Motor neuron (in vitro differentiated cells): ENCODE measurements at regions of chr11 and their contacts with region 1.

Region 1: GRCh38 chr11:82682003-82682751 is 51.5 kb downstream of the FAM181B start:
- ATAC-seq: peak in 4 of 8 experiments; percentile 50 to 96 (median 93)
- H3K4me3 ChIP-seq: no peak overlapping the region
- H3K27ac ChIP-seq: no peak overlapping the region
- H3K4me1 ChIP-seq: no peaks in the 10 kb centered on the region

Region 2: DNA sequence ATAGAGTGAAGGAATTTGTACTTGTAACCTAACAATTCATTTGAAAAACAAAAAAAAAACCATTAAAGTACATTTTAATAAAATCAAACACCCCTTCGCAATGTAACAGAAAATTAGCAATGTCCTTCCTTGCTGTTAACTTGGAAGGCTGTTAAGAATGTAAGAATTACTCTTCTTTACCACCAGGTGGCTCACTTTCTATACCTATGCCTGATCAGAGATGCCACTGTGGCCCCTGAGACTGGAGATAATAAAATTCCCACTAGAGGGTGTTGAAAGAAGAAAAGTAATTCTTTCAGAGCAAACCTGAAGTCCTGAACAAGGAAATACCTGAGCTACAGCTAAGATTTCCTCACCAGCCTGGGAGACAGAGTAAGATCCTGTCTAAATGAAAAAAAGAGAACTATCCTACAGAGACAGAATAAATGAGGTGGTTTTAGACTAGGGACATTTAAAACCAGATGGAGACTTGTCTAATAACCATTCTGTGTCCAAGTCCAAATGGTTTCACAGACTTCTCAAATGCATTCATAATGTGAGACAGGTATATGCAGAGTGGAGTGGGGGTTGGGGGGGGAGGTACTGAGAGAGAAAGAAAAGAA is 1037.8 kb before region 1 on chr11:
- in situ Hi-C with region 1: loop called in 2 of 9 experiments (anchors 25 kb)
- ATAC-seq: peak in 4 of 8 experiments; percentile 44 to 91 (median 62)
- H3K4me3 ChIP-seq: no peak overlapping the region
- H3K27ac ChIP-seq: no peak overlapping the region
- H3K4me1 ChIP-seq: peaks cover 6 to 10% of the 10 kb centered on the region in 2 donors

Region 3: DNA sequence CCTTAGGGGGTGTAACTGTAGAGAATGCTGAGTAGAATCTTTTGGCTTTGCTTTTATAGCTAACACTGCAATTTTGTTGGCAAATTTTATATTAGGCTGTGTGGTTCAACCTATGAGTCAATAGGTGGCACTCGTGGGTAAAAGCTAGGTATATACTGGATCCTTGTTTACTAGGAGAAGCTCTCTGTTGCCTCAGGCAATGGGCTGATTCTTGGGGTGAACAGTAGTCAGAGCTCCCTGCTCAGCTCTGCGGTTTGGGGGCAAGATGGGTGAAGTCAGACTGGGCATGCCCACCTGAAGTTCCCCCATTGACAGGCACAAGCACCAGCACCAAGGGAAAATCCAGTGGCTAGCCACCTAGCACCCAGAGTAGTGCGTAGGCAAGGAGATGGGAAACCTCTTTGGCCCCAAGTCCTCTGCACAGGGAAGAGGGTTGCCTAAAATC is 187.2 kb before region 1 on chr11:
- in situ Hi-C with region 1: loop called in 1 of 9 experiments (anchors 25 kb)
- ATAC-seq: peak in 3 of 8 experiments; percentile 34 to 80 (median 62)
- H3K4me3 ChIP-seq: no peak overlapping the region
- H3K27ac ChIP-seq: no peak overlapping the region
- H3K4me1 ChIP-seq: no peaks in the 10 kb centered on the region

Region 4: DNA sequence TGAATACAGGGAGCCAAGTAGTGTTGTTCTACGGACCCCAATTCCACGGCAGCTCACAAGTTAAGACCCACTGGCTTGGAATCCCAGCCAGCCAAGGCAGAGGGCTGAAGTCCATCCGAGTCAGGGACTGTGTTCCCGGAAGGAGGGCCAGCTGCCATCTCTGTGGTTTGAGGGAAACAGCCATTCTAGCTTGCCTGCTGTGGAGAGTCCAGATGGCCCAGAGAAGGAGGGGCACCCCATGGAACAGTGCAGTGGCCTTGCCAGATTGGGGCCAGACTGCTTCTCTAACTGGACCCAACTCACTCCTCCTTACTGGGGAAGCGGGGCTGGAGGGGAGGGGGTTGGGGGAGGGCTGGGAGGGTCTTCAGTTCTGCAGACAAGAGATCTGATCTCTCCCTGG is 104.9 kb before region 1 on chr11:
- in situ Hi-C with region 1: no loop called
- ATAC-seq: no peak
- H3K4me3 ChIP-seq: no peak overlapping the region
- H3K27ac ChIP-seq: no peak overlapping the region
- H3K4me1 ChIP-seq: no peaks in the 10 kb centered on the region

Region 5: DNA sequence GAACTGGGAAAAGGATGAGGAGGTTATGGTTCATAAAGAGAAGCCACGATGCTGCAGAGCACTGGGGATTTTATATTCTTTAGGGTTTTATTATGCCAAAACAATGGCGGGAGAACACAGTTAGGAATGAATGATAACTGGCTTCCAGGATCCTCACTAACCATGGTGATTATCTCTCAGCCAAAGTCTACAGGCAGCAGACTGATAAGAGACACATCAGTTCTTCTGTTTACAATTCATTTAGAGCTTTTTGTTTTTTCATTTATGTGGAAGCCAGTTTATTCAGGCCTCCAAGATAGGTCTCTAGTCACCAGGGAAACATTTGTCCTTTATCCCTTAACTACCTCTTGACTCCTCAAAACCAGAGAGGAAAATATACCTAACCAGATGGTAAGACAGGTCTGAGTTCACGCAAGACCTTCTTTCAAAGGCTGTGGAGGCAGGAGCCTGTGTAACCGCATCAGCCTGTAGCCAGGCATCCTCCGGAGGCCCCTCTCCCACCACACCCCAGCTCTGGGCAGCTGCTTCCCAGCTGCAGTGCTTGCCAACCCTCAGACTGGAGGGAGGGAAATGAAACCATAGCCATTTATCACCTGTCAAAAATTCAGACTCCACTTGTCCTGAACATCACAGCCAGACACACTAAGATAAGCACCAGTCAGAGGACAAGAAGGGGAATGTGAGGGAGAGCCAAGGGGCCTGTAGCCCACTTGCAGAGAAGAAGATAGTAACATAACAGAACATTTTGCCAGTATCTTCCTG is 108.7 kb after region 1 on chr11:
- in situ Hi-C with region 1: no loop called
- ATAC-seq: peak in 6 of 8 experiments; percentile 38 to 89 (median 80)
- H3K4me3 ChIP-seq: no peak overlapping the region
- H3K27ac ChIP-seq: no peak overlapping the region
- H3K4me1 ChIP-seq: peaks cover 15 to 35% of the 10 kb centered on the region in 2 donors